ENCODE measurements at regions of chr15 and their contacts with region 1.

Region 1: GRCh38 chr15:58770857-58771620 is at the start of gene MINDY2:
- DNase-seq: peak; percentile 95
- H3K4me3 ChIP-seq: peak within 1 kb of the TSS; percentile 95
- H3K27ac ChIP-seq: peak within 1 kb of the TSS; percentile 91 to 97
- H3K4me1 ChIP-seq: peaks cover 2 to 7% of the 10 kb centered on the region in 2 experiments; a peak in 3 of 4 replicates
- H3K27me3 ChIP-seq: no peaks in the 10 kb centered on the region
- CTCF ChIP-seq: peak; percentile 44
- EP300 ChIP-seq: no peak; a peak in 1 of 4 replicates
- RAD21 ChIP-seq: no peak
- polyA plus RNA-seq, gene MINDY2: 1.0 and 1.5 TPM in 2 replicates

Region 2: DNA sequence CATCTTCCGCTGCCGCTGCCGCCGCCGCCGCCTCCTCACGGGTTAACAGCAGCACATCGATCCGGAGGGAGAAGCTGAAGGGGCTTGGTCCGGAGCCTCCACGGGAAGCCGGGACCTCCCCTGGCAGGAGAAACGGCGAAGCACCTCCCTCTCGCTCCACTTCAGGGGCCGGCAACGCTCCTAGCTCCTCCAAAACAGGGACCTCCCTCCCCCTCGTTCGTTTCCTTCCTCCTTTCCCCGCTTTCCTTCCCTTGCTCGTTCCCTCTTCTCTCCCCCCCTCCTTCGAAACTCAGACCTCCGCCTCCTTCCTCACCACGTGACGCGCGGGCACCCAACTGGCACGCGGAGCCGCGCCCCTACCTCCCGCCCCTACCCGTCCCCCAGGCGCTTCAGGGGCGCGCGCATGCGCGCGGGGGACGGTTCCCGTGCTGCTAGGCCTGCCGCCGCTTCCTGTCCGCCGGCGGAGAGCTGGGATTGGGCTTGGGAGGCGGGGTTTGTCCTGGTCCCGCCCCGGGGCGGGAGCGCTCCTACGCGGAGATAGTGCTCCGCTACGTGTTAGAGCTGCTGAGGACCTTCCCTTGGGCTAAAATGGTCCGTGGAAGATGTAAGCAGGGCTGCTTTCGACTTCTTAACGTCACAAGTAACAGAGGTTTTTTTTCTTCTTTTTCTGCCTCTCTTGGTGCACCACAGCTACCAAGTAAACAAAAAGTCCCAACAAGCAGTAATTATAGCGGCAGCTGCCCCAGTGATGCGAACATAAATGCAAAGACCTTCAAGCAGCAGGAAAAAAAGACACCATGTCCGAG is 21.3 kb before region 1 on chr15 and contains the start of gene ADAM10:
- CTCF ChIA-PET with region 1: interaction called, 15 read pairs
- POLR2A ChIA-PET with region 1: interaction called, 54 read pairs
- DNase-seq: peak; percentile 99
- H3K4me3 ChIP-seq: peak within 1 kb of the TSS; percentile 83 to 88
- H3K27ac ChIP-seq: peak within 1 kb of the TSS; percentile 93 to 96
- H3K4me1 ChIP-seq: peaks cover 8 to 11% of the 10 kb centered on the region in 2 experiments; a peak in 3 of 4 replicates
- H3K27me3 ChIP-seq: no peaks in the 10 kb centered on the region
- CTCF ChIP-seq: no peak
- EP300 ChIP-seq: no peak
- RAD21 ChIP-seq: peak; percentile 3; the same call in 1 of the 2 replicates
- polyA plus RNA-seq, gene ADAM10: 83.5 and 104 TPM in 2 replicates

Measured in SK-N-SH (cell line).